H1 (cell line): ENCODE measurements at regions of chr16 and their contacts with region 1.

Region 1: DNA sequence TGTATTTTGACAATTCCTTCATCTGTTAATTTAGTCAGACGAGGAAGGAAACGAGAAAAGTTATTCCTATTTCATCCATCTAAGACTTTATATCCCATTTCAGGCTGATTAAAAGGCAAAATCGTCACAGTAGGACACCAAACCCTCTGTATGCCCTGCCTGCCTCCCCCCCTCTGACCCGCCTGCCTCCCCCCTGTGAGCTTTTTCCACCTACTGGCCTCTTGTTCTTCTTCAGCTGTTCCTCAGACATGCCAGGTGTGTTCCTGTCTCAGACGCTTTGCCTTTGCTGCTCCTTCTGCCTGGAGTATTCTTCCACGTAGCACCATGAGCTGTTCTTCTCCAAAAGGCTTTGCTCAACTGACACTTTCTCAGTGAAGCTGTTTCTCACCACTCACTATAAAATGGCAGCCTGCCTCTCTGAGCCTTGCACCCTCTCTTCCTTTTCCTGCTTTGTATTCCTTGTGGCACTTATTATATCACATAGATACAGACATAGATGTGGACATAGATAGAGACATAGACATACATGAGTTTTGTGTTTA is 723.4 kb downstream of the MAF start:
- DNase-seq: no peak
- H3K4me3 ChIP-seq: no peak overlapping the region
- H3K27ac ChIP-seq: no peak overlapping the region
- H3K4me1 ChIP-seq: peaks cover 0 to 11% (median 4%) of the 10 kb centered on the region in 4 experiments; a peak in 4 of 7 replicates
- H3K27me3 ChIP-seq: no peaks in the 10 kb centered on the region
- CTCF ChIP-seq: no peak
- EP300 ChIP-seq: no peak
- POLR2A ChIP-seq: no peak
- RAD21 ChIP-seq: no peak

Region 2: DNA sequence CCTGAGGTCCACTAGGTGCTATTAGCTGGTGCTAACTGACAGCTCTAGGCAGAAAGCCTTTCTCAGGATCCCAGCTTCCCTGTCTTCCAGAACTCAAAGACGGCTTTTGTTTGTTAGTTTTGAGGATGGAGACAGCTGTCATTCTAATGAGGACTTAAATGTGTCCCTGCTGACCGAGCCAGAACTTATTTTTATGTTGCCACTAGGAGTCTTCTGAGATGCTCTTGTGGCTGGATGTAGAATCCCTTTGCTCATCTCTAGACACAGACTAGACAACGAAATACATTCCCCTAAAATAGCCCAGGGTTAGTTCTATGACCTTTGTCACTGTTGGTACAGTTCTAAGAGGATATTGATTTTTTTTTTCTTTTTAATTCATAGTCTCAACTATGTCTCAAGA is 11.3 kb after region 1 on chr16:
- CTCF ChIA-PET with region 1: interaction called, 13 read pairs
- POLR2A ChIA-PET with region 1: no interaction called
- DNase-seq: no peak
- H3K4me3 ChIP-seq: no peak overlapping the region
- H3K27ac ChIP-seq: no peak overlapping the region
- H3K4me1 ChIP-seq: peaks cover 0 to 4% (median 0%) of the 10 kb centered on the region in 4 experiments; a peak in 1 of 7 replicates
- H3K27me3 ChIP-seq: no peaks in the 10 kb centered on the region
- CTCF ChIP-seq: no peak
- EP300 ChIP-seq: no peak
- POLR2A ChIP-seq: no peak
- RAD21 ChIP-seq: no peak